ENCODE measurements at regions of chr2 and their contacts with region 1.

Region 1: DNA sequence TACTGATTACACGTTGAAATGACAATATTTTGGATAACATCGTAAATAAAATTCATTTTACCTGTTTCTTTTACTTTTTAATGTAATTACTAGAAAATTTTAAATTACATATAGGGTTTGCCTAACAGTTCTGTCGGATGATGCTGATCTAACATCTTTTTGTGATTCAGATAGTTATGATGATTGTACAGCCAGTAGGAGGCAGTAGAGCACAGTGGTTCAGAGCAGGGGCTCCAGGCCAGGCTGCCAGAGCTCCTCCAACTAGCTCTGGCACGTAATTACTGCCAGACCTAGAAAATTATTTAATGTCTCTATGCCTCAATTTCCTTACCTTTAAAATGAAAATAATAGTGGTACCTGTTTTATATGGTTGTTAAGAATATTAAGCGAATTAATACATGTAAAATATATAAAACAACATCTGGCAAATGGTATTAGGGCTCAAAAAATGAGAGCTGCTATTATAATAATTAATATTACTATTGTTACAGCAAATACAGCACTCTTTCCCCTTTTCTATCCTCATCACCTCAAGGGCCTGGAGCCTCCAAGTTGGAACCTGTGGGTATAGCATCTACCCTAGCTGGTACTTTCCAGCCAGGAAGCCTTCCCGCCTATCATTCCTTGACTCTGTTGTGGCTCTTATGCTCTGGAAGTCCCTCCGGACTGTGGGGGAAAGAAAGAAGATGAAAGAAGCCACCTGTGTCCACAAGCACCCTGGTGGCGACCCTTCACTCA is 47.7 kb upstream of the PLA2R1 start:
- DNase-seq: peak; percentile 64
- H3K4me3 ChIP-seq: no peak overlapping the region
- H3K27ac ChIP-seq: no peak overlapping the region
- H3K4me1 ChIP-seq: peaks cover 0 to 3% (median 0%) of the 10 kb centered on the region in 4 donors
- H3K27me3 ChIP-seq: no peaks in the 10 kb centered on the region
- CTCF ChIP-seq: peak; percentile 71 to 79 (median 76)
- EP300 ChIP-seq: no peak
- POLR2A ChIP-seq: no peak

Region 2: GRCh38 chr2:160994141-160995002 is 884.3 kb after region 1 on chr2:
- in situ Hi-C with region 1: loop called in 2 of 4 experiments (anchors 25 kb)
- intact Hi-C with region 1: no loop called
- DNase-seq: peak; percentile 75
- H3K4me3 ChIP-seq: no peak overlapping the region
- H3K27ac ChIP-seq: peak overlapping the region in 3 of 4 donors; percentile 4 to 41 (median 32)
- H3K4me1 ChIP-seq: no peaks in the 10 kb centered on the region
- H3K27me3 ChIP-seq: no peaks in the 10 kb centered on the region
- CTCF ChIP-seq: peak; percentile 79 to 84 (median 83)
- EP300 ChIP-seq: no peak
- POLR2A ChIP-seq: no peak

Region 3: DNA sequence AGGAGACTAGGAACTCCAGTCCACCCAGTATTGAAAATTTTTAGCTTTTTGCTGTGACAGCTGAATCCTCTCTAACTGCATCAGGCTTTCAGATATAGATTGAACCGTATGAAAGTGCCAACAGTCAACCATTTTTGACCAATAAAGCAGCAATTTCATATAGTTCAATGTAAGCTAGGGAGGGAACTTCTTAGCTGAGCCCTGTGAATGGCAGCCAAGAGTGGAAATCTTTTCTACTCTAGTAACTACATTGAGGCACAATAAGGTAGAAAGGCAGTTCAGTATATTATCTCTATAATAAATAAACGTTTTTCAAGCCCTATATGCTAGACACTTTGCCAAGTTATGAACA is 953.8 kb after region 1 on chr2:
- in situ Hi-C with region 1: no loop called
- intact Hi-C with region 1: loop called (anchors 2 kb)
- DNase-seq: no peak
- H3K4me3 ChIP-seq: no peak overlapping the region
- H3K27ac ChIP-seq: no peak overlapping the region
- H3K4me1 ChIP-seq: peaks cover 0 to 12% (median 3%) of the 10 kb centered on the region in 4 donors
- H3K27me3 ChIP-seq: no peaks in the 10 kb centered on the region
- CTCF ChIP-seq: no peak
- EP300 ChIP-seq: no peak
- POLR2A ChIP-seq: no peak

Measured in transverse colon (tissue), 4 donors.